ENCODE measurements at regions of chr10 and their contacts with region 1.

Region 1: DNA sequence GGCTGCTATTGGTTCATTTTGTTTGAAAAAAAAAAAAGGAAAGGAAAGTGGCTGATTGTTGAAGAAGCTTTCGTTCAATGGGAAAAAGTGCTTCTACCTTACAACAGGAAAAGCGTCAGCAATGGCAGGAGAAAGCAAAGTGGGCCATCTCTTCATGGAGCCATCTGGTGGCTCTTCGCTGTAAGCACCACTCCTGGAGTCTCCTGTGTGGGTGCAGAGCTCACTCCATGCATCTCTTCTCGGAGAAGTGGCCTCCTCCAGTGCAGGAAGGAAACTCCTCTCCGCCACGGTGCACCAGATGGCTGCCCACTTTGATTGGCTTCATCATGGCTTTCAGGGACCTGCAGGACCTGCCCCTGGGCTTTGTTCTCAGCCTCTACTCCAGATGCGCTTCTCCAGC is 250.9 kb downstream of the PTEN start:
- DNase-seq: peak; percentile 31 to 58
- ATAC-seq: peak; percentile 57 to 88 (median 72)
- H3K4me3 ChIP-seq: no peak overlapping the region
- H3K27ac ChIP-seq: no peak overlapping the region
- H3K4me1 ChIP-seq: peaks cover 4% of the 10 kb centered on the region
- H3K27me3 ChIP-seq: no peaks in the 10 kb centered on the region
- CTCF ChIP-seq: peak; percentile 63

Region 2: GRCh38 chr10:87850742-87851205 is 263.6 kb before region 1 on chr10:
- intact Hi-C with region 1: loop called (anchors 2 kb)
- DNase-seq: peak; percentile 37 to 65
- ATAC-seq: peak; percentile 88 to 99 (median 94)
- H3K4me3 ChIP-seq: no peak overlapping the region
- H3K27ac ChIP-seq: no peak overlapping the region
- H3K4me1 ChIP-seq: peaks cover 3% of the 10 kb centered on the region
- H3K27me3 ChIP-seq: no peaks in the 10 kb centered on the region
- CTCF ChIP-seq: peak; percentile 75

Region 3: GRCh38 chr10:88386821-88387773 is 272.7 kb after region 1 on chr10:
- intact Hi-C with region 1: loop called in 1 of 2 experiments (anchors 5 kb)
- DNase-seq: no peak
- ATAC-seq: peak; percentile 60 to 87 (median 77)
- H3K4me3 ChIP-seq: peak overlapping the region; percentile 4
- H3K27ac ChIP-seq: peak overlapping the region; percentile 6
- H3K4me1 ChIP-seq: peaks cover 18% of the 10 kb centered on the region
- H3K27me3 ChIP-seq: no peaks in the 10 kb centered on the region
- CTCF ChIP-seq: no peak